ENCODE measurements at regions of chr12 and their contacts with region 1.

Region 1: DNA sequence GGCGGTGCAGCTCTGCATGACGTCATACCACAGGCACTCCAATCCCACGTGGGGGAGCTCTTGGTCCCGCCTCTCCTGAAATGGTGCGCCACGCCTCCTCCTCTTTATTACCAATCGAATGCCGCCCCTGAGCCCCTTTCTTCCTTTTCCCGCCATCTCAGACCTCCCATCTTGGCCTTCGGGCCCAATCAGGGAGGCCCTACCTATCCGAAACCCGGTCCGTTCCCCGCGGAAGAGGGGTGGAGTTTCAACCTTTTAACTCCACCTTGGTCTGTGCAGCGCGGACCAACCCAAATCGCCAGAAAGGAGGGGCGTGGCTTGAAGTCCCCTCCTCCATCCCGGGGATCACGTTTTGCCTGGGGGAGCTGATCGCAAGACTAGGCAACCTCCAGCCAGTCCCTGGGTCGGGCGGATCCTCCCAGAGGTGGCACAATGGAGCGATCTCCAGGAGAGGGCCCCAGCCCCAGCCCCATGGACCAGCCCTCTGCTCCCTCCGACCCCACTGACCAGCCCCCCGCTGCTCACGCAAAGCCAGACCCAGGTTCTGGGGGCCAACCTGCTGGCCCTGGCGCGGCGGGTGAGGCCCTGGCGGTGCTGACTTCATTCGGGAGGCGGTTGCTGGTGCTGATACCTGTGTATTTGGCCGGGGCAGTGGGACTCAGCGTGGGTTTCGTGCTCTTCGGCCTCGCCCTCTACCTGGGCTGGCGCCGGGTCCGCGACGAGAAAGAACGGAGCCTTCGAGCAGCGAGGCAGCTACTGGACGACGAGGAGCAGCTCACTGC is at the start of gene ESYT1:
- DNase-seq: peak; percentile 99
- H3K4me3 Mint-ChIP-seq: peak within 1 kb of the TSS; percentile 91
- H3K27ac Mint-ChIP-seq: peak within 1 kb of the TSS; percentile 86
- H3K4me1 Mint-ChIP-seq: peaks cover 55% of the 10 kb centered on the region
- H3K27me3 Mint-ChIP-seq: no peaks in the 10 kb centered on the region
- total RNA-seq, gene ESYT1: 87.4 to 88.9 TPM

Region 2: GRCh38 chr12:56152318-56153033 is 24.4 kb after region 1 on chr12 and contains the start of gene MYL6B:
- CTCF ChIA-PET with region 1: interaction called, 4 read pairs
- intact Hi-C with region 1: loop called (anchors 1 kb)
- DNase-seq: peak; percentile 98
- H3K4me3 Mint-ChIP-seq: peak within 1 kb of the TSS; percentile 84
- H3K27ac Mint-ChIP-seq: peak within 1 kb of the TSS; percentile 98
- H3K4me1 Mint-ChIP-seq: peaks cover 37% of the 10 kb centered on the region
- H3K27me3 Mint-ChIP-seq: no peaks in the 10 kb centered on the region
- total RNA-seq, gene MYL6B: 49.2 to 57.5 TPM

Region 3: DNA sequence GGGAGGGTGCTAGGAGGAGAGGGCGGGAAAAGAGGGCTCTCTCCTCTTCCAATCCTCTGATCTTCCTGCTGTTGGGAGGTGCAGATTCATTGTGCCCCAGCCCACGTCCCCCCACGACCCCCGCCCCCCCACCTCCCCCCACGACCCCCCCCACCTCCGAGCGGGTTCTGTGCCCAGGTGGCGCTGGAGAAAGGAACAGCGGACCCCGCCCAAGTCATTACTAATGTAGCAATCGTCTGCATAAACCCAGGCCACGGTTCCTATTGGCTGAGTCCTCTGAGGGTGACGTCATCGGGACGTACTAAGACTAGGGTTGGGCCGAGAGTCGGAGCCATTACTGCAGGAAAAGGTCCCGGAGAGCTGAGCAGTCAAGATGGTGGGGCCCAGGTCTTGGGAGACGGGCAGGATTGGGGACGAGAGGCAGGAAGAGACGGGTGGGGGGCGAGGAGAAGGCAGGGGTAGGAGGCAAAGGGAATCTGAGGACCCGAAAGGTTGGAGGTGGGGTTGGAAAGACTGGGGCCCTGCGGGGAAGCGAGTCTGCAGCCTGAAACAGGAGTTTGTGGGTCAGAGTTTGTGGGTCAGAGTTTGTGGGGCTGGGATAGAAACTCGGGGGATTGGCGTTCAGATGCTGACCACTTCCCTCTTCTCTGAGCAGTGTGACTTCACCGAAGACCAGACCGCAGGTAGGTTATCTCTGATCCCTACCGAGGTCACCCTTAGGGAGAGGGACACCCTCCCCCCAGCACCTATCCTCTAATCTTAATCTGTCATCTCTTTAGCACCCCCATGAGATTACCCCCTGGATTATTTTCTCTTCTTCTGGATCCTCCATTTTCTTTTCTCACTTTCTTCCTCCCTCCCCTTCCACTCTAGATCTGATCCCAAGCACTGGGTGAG is 30.2 kb after region 1 on chr12 and contains the start of gene MYL6:
- CTCF ChIA-PET with region 1: interaction called, 43 read pairs
- intact Hi-C with region 1: loop called (anchors 1 kb)
- DNase-seq: peak; percentile 98
- H3K4me3 Mint-ChIP-seq: peak within 1 kb of the TSS; percentile 96
- H3K27ac Mint-ChIP-seq: peak within 1 kb of the TSS; percentile 95
- H3K4me1 Mint-ChIP-seq: peaks cover 42% of the 10 kb centered on the region
- H3K27me3 Mint-ChIP-seq: no peaks in the 10 kb centered on the region
- total RNA-seq, gene MYL6: 841 to 868 TPM